Natural killer cell (primary cell): ENCODE measurements at regions of chr10 and their contacts with region 1.

Region 1: GRCh38 chr10:38010119-38010903 is at the start of gene ZNF33A:
- DNase-seq: peak; percentile 85 to 98
- ATAC-seq: peak; percentile 82 to 90 (median 84)
- H3K4me3 ChIP-seq: peak within 1 kb of the TSS; percentile 72
- H3K4me3 Mint-ChIP-seq: peak within 1 kb of the TSS; percentile 98
- H3K27ac ChIP-seq: peak within 1 kb of the TSS; percentile 96
- H3K27ac Mint-ChIP-seq: peak within 1 kb of the TSS; percentile 99 to 100
- H3K4me1 ChIP-seq: peaks cover 8% of the 10 kb centered on the region
- H3K4me1 Mint-ChIP-seq: peaks cover 32% of the 10 kb centered on the region in 2 donors
- H3K27me3 ChIP-seq: no peaks in the 10 kb centered on the region
- H3K27me3 Mint-ChIP-seq: no peaks in the 10 kb centered on the region
- CTCF ChIP-seq: no peak
- total RNA-seq, gene ZNF33A: 31.2 to 44.7 (median 34.1) TPM

Region 2: GRCh38 chr10:36989233-36989632 is 1021.1 kb before region 1 on chr10:
- intact Hi-C with region 1: no loop called
- DNase-seq: no peak
- ATAC-seq: no peak
- H3K4me3 ChIP-seq: no peak overlapping the region
- H3K4me3 Mint-ChIP-seq: no peak overlapping the region
- H3K27ac ChIP-seq: no peak overlapping the region
- H3K27ac Mint-ChIP-seq: no peak overlapping the region
- H3K4me1 ChIP-seq: no peaks in the 10 kb centered on the region
- H3K4me1 Mint-ChIP-seq: no peaks in the 10 kb centered on the region
- H3K27me3 ChIP-seq: no peaks in the 10 kb centered on the region
- H3K27me3 Mint-ChIP-seq: no peaks in the 10 kb centered on the region
- CTCF ChIP-seq: no peak

Region 3: DNA sequence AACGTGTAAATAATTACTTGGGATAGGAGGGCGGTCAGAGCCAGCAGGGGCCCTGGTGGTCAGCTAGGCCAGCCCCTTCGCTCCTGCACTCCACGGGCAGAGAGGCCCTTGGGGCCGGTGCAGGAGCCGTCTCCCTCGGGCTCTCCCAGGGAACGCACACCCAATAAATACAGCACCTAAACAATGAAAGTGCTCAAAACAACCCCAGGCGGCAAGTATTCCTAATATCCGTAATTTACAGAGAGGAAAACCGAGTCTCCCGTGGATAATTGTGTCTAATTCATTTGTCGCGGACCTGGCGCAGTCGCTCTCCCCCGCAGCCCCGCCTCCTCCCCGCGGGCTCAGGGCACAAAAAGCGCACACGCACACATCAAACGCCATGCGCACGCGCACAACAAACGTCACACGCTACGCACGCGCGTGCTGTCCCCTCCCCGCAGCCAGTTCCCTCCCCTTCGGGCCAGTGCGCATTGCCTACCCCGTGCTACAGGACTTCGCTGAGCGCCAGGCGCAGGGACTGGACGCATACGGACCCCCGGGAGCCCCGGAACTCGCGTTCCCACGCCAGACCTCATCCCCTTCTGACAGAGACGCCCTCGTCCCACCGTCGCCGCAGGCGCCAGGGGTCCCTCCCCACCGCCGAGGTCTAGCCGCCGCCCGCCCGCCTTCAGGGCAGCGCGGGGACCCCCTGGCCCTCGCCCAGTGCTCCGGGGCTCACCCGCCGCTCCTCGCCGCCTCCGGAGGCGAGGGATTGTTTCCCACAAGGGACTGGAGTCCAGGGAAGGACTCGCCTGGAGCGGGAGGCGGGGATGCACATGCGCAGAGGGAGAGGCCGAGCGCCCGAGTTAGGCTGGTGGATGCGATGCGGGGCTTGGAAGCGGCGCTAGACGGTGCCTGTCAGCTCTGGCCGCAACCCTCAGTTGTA is 152.8 kb before region 1 on chr10 and contains the start of gene ZNF248:
- intact Hi-C with region 1: loop called (anchors 1 kb)
- DNase-seq: peak; percentile 94 to 99
- ATAC-seq: peak; percentile 93 to 98 (median 94)
- H3K4me3 ChIP-seq: peak within 1 kb of the TSS; percentile 82
- H3K4me3 Mint-ChIP-seq: peak within 1 kb of the TSS; percentile 86
- H3K27ac ChIP-seq: peak within 1 kb of the TSS; percentile 85
- H3K27ac Mint-ChIP-seq: peak within 1 kb of the TSS; percentile 87 to 96
- H3K4me1 ChIP-seq: peaks cover 9% of the 10 kb centered on the region
- H3K4me1 Mint-ChIP-seq: peaks cover 21 to 29% of the 10 kb centered on the region in 2 donors
- H3K27me3 ChIP-seq: no peaks in the 10 kb centered on the region
- H3K27me3 Mint-ChIP-seq: no peaks in the 10 kb centered on the region
- CTCF ChIP-seq: no peak
- total RNA-seq, gene ZNF248: 2.8 to 6.3 (median 5.1) TPM

Region 4: GRCh38 chr10:37976091-37976879 is 34.0 kb before region 1 on chr10 and contains the start of gene ZNF25:
- intact Hi-C with region 1: loop called (anchors 1 kb)
- DNase-seq: peak; percentile 90 to 100
- ATAC-seq: peak; percentile 92 to 98 (median 94)
- H3K4me3 ChIP-seq: peak within 1 kb of the TSS; percentile 51
- H3K4me3 Mint-ChIP-seq: peak within 1 kb of the TSS; percentile 92
- H3K27ac ChIP-seq: peak within 1 kb of the TSS; percentile 78
- H3K27ac Mint-ChIP-seq: peak within 1 kb of the TSS; percentile 89 to 97
- H3K4me1 ChIP-seq: peaks cover 6% of the 10 kb centered on the region
- H3K4me1 Mint-ChIP-seq: peaks cover 25 to 38% of the 10 kb centered on the region in 2 donors
- H3K27me3 ChIP-seq: no peaks in the 10 kb centered on the region
- H3K27me3 Mint-ChIP-seq: no peaks in the 10 kb centered on the region
- CTCF ChIP-seq: peak; percentile 80
- total RNA-seq, gene ZNF25: 7.8 to 11.1 (median 8.8) TPM

Region 5: DNA sequence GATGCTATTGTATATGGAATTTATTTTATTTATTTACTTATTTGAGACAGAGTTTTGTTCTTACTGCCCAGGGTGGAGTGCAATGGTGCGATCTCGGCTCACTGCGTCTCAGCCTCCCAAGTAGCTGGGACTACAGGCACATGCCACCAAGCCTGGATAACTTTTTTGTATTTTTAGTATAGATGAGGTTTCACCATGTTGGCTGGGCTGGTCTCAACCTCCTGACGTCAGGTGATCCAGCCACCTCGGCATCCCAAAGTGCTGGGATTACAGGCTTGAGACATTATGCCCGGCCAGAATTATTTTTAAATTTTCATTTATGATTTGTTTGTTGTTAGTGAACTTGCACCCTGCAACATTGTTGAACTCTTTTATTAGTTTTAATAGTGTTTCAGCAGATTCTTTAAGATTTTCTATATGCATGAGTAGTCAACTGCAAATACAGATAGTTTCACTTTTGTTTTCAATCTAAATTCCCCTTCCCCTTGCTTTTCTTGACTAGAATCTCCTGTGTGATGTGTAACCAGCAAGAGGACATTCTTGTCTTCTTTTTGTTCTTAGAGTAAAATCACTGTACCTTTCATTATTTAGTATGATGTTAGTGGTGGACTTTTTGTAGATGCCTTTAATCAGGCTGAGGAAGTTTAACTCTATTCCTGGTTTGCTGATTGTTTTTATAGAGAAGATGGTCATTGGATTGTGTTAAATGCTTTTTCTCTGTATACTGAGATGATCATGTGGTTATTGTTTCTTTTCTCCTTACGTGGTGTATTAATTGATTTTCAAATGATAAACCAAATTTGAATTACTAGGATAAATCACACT is 28.0 kb after region 1 on chr10:
- intact Hi-C with region 1: loop called (anchors 1 kb)
- DNase-seq: peak in 1 of 2 donors; percentile 58
- ATAC-seq: peak; percentile 72 to 92 (median 84)
- H3K4me3 ChIP-seq: peak overlapping the region; percentile 31
- H3K4me3 Mint-ChIP-seq: peak overlapping the region; percentile 87
- H3K27ac ChIP-seq: peak overlapping the region; percentile 81
- H3K27ac Mint-ChIP-seq: peak overlapping the region; percentile 91 to 94
- H3K4me1 ChIP-seq: peaks cover 9% of the 10 kb centered on the region
- H3K4me1 Mint-ChIP-seq: peaks cover 24 to 25% of the 10 kb centered on the region in 2 donors
- H3K27me3 ChIP-seq: no peaks in the 10 kb centered on the region
- H3K27me3 Mint-ChIP-seq: no peaks in the 10 kb centered on the region
- CTCF ChIP-seq: no peak

Region 6: GRCh38 chr10:38094158-38094920 is 84.0 kb after region 1 on chr10 and contains the start of gene ZNF37A:
- intact Hi-C with region 1: loop called (anchors 1 kb)
- DNase-seq: peak; percentile 78 to 95
- ATAC-seq: peak; percentile 92 to 98 (median 95)
- H3K4me3 ChIP-seq: peak within 1 kb of the TSS; percentile 90
- H3K4me3 Mint-ChIP-seq: peak within 1 kb of the TSS; percentile 95
- H3K27ac ChIP-seq: peak within 1 kb of the TSS; percentile 94
- H3K27ac Mint-ChIP-seq: peak within 1 kb of the TSS; percentile 90 to 93
- H3K4me1 ChIP-seq: peaks cover 19% of the 10 kb centered on the region
- H3K4me1 Mint-ChIP-seq: peaks cover 31 to 38% of the 10 kb centered on the region in 2 donors
- H3K27me3 ChIP-seq: no peaks in the 10 kb centered on the region
- H3K27me3 Mint-ChIP-seq: no peaks in the 10 kb centered on the region
- CTCF ChIP-seq: no peak
- total RNA-seq, gene ZNF37A: 11.3 to 22.2 (median 19.5) TPM

Region 7: DNA sequence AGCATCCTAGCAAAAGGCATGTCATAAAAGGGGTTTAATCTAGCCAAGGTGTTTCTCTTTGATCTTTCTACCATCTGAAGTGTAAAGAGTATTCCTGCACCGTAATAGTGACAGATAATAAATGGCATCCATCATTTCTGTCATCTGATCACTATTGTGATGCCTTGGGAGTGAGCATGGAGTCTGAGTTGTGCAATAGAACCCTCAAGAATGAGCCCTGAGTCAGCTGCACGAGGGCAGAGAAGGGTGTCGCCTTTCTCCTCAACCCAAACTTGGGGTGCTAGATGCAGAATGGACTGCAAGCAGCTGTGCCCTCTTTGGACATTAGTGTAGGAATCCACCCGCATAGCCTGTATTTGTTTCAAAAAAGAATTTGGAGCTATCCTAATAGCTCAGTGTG is 199.0 kb after region 1 on chr10:
- intact Hi-C with region 1: no loop called
- DNase-seq: no peak
- ATAC-seq: no peak
- H3K4me3 ChIP-seq: no peak overlapping the region
- H3K4me3 Mint-ChIP-seq: no peak overlapping the region
- H3K27ac ChIP-seq: no peak overlapping the region
- H3K27ac Mint-ChIP-seq: no peak overlapping the region
- H3K4me1 ChIP-seq: no peaks in the 10 kb centered on the region
- H3K4me1 Mint-ChIP-seq: no peaks in the 10 kb centered on the region
- H3K27me3 ChIP-seq: no peaks in the 10 kb centered on the region
- H3K27me3 Mint-ChIP-seq: no peaks in the 10 kb centered on the region
- CTCF ChIP-seq: no peak